GM12878 (cell line): ENCODE measurements at regions of chr11 and their contacts with region 1.

Region 1: GRCh38 chr11:116691771-116692177 is 81.0 kb downstream of the BUD13 start:
- DNase-seq: no peak
- ATAC-seq: peak; percentile 94
- H3K4me3 ChIP-seq: no peak overlapping the region
- H3K27ac ChIP-seq: no peak overlapping the region
- H3K4me1 ChIP-seq: no peaks in the 10 kb centered on the region
- H3K27me3 ChIP-seq: no peaks in the 10 kb centered on the region
- CTCF ChIP-seq: peak; percentile 79 to 94 (median 93)
- EP300 ChIP-seq: no peak
- POLR2A ChIP-seq: no peak
- RAD21 ChIP-seq: peak; percentile 85

Region 2: DNA sequence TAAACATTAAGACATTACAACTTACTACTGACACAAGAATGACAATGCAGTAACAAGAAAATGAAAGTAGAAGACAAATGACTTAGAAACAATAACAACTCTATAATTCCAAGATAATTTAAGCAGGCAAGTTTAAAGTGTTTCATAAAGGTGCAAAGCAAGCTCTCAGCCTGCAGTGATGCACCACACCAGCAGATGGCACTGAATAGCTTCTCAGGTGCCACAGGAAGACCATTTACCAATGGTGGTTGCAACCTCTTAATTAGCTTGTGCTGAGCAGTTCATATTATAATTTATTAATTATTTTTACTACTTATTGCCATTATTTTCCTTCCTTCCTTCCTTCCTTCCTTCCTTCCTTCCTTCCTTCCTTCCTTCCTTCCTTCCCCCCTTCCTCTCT is 1952.8 kb before region 1 on chr11:
- CTCF ChIA-PET with region 1: no interaction called
- POLR2A ChIA-PET with region 1: no interaction called
- RAD21 ChIA-PET with region 1: no interaction called
- SMC1A ChIA-PET with region 1: no interaction called
- in situ Hi-C with region 1: no loop called
- intact Hi-C with region 1: loop called (anchors 5 kb)
- DNase-seq: no peak
- ATAC-seq: peak; percentile 76
- H3K4me3 ChIP-seq: no peak overlapping the region
- H3K27ac ChIP-seq: no peak overlapping the region
- H3K4me1 ChIP-seq: no peaks in the 10 kb centered on the region
- H3K27me3 ChIP-seq: peaks cover 0 to 1% of the 10 kb centered on the region in 2 experiments; a peak in 2 of 4 replicates
- CTCF ChIP-seq: peak; percentile 68 to 84 (median 82)
- EP300 ChIP-seq: no peak
- POLR2A ChIP-seq: no peak
- RAD21 ChIP-seq: peak; percentile 69

Region 3: GRCh38 chr11:116454020-116454645 is 237.6 kb before region 1 on chr11:
- CTCF ChIA-PET with region 1: interaction called, 24 read pairs
- POLR2A ChIA-PET with region 1: no interaction called
- RAD21 ChIA-PET with region 1: interaction called, 8 read pairs
- SMC1A ChIA-PET with region 1: no interaction called
- in situ Hi-C with region 1: loop called (anchors 5 kb)
- intact Hi-C with region 1: loop called (anchors 1 kb)
- DNase-seq: no peak
- ATAC-seq: peak; percentile 80
- H3K4me3 ChIP-seq: no peak overlapping the region
- H3K27ac ChIP-seq: no peak overlapping the region
- H3K4me1 ChIP-seq: no peaks in the 10 kb centered on the region
- H3K27me3 ChIP-seq: no peaks in the 10 kb centered on the region; a peak in 2 of 4 replicates
- CTCF ChIP-seq: peak; percentile 63 to 67 (median 66)
- EP300 ChIP-seq: no peak
- POLR2A ChIP-seq: no peak
- RAD21 ChIP-seq: peak; percentile 49

Region 4: GRCh38 chr11:116513894-116514293 is 177.9 kb before region 1 on chr11:
- CTCF ChIA-PET with region 1: interaction called, 18 read pairs
- POLR2A ChIA-PET with region 1: no interaction called
- RAD21 ChIA-PET with region 1: interaction called, 8 read pairs
- SMC1A ChIA-PET with region 1: interaction called, 5 read pairs
- in situ Hi-C with region 1: no loop called
- intact Hi-C with region 1: loop called (anchors 1 kb)
- DNase-seq: no peak
- ATAC-seq: peak; percentile 53
- H3K4me3 ChIP-seq: no peak overlapping the region
- H3K27ac ChIP-seq: no peak overlapping the region
- H3K4me1 ChIP-seq: no peaks in the 10 kb centered on the region
- H3K27me3 ChIP-seq: peaks cover 0 to 3% of the 10 kb centered on the region in 2 experiments; a peak in 2 of 4 replicates
- CTCF ChIP-seq: peak; percentile 36 to 52 (median 37); a peak in 5 of 6 replicates
- EP300 ChIP-seq: no peak
- POLR2A ChIP-seq: no peak
- RAD21 ChIP-seq: peak; percentile 50

Region 5: DNA sequence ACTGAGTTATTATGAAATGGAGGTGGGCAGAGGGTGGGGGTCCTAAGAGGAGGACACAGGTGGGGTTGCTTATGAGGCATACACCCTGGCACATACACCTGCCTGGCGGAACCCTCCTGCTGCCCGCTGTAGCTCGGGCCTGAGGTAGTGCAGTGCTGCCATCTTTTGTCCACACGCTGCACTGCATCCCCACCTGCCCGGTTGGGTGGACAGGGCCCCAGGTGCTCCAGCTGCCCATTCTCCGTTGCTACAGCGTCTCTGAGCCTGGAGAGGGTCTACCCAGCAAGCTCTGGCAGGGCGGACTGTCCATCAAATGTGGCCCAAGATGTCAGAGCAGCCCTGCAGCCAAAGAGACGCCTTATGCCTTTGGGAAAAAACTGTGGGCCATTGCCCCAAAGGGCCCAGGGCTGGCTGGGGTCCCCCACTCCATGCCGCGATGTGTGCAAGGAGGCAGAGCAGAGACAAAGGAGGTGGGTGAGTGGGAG is 50.2 kb before region 1 on chr11:
- CTCF ChIA-PET with region 1: interaction called, 12 read pairs
- POLR2A ChIA-PET with region 1: no interaction called
- RAD21 ChIA-PET with region 1: interaction called, 3 read pairs
- SMC1A ChIA-PET with region 1: interaction called, 5 read pairs
- in situ Hi-C with region 1: no loop called
- intact Hi-C with region 1: no loop called
- DNase-seq: no peak
- ATAC-seq: peak; percentile 92
- H3K4me3 ChIP-seq: no peak overlapping the region
- H3K27ac ChIP-seq: no peak overlapping the region
- H3K4me1 ChIP-seq: no peaks in the 10 kb centered on the region
- H3K27me3 ChIP-seq: no peaks in the 10 kb centered on the region
- CTCF ChIP-seq: peak; percentile 79 to 82 (median 81)
- EP300 ChIP-seq: no peak
- POLR2A ChIP-seq: no peak
- RAD21 ChIP-seq: peak; percentile 76

Region 6: GRCh38 chr11:116702772-116703385 is 11.1 kb after region 1 on chr11:
- CTCF ChIA-PET with region 1: interaction called, 12 read pairs
- POLR2A ChIA-PET with region 1: no interaction called
- RAD21 ChIA-PET with region 1: interaction called, 3 read pairs
- SMC1A ChIA-PET with region 1: interaction called, 3 read pairs
- in situ Hi-C with region 1: no loop called
- intact Hi-C with region 1: no loop called
- DNase-seq: no peak
- ATAC-seq: no peak
- H3K4me3 ChIP-seq: no peak overlapping the region
- H3K27ac ChIP-seq: no peak overlapping the region
- H3K4me1 ChIP-seq: no peaks in the 10 kb centered on the region
- H3K27me3 ChIP-seq: peaks cover 0 to 5% of the 10 kb centered on the region in 2 experiments; a peak in 3 of 4 replicates
- CTCF ChIP-seq: no peak
- EP300 ChIP-seq: no peak
- POLR2A ChIP-seq: no peak
- RAD21 ChIP-seq: no peak